Thyroid gland (tissue), 4 donors: ENCODE measurements at regions of chr1 and their contacts with region 1.

Region 1: GRCh38 chr1:184222652-184223052 is 164.2 kb upstream of the C1orf21 start:
- DNase-seq: peak; percentile 41 to 56
- H3K4me3 ChIP-seq: no peak overlapping the region
- H3K27ac ChIP-seq: no peak overlapping the region
- H3K4me1 ChIP-seq: no peaks in the 10 kb centered on the region
- H3K27me3 ChIP-seq: no peaks in the 10 kb centered on the region
- CTCF ChIP-seq: peak; percentile 78 to 96 (median 91)
- POLR2A ChIP-seq: no peak

Region 2: DNA sequence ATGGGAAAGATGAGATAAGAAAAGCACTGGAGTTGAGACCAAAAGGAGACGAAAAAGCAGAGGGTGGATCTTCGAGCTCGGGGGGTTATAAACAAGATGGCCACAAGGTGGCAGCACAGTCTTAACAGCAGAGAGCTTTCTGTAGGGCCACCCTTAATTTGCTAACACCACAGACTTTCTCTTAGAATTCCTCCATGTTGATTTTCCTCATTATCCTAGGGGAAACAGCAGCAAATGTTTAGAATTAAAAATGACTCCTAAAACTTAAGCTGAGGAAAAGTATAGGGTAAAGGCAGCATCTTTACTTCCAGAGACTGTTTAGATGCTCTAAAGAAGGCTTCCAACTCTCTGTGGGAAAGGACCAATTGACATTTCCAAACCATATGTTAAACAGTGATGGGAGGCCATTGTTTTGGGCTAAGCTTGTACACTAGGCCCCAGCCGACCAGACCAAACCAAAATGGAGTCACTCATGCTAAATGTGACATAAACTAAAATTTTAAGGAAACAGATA is 567.0 kb before region 1 on chr1:
- intact Hi-C with region 1: loop called (anchors 10 kb)
- DNase-seq: peak; percentile 78 to 83
- H3K4me3 ChIP-seq: no peak overlapping the region
- H3K27ac ChIP-seq: no peak overlapping the region
- H3K4me1 ChIP-seq: no peaks in the 10 kb centered on the region
- H3K27me3 ChIP-seq: no peaks in the 10 kb centered on the region
- CTCF ChIP-seq: peak; percentile 63 to 91 (median 86)
- POLR2A ChIP-seq: no peak

Region 3: DNA sequence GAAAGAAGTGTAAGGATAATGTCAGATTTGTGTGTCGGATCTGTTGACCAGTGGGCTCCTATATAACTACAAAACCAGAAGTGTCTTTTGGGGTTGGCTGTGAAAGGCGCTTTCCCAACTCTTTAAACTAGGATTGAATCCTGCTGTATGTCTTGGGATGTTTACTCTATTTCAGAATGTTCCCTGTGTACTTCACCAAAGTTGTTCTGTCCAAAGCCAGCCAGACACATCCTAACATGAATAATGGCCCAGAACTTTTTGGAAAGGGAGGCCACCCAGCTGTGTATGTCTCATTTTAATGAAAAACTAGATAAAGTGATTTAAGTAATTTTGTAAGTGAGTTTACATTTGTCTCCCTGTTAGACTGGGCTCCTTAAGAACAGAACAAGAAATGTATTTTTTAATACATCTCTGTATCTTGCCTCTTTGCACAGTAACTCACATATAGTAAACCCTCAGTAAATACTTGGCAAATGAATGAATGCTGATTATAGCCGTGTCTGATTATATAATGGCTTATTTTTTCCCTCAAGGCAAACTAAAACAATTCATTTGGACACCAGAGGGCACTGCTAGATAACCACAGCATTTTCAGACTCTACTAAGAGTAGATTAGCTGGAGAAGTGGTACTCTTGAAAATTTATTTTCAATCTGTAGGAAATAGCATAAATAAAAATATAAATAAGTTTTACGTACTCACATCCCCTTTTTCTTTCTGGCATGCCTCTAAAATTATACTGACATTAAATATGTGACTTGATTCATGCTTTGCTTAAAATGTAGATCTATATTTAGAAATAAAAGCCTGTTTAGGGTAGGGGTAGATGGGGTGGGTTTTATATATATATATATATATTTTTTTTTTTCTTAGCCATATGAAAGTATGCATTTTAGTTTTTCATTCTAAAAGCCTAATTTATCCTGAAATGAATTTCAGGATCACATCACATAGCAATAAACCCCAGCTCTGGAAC is 147.3 kb before region 1 on chr1:
- intact Hi-C with region 1: loop called (anchors 5 kb)
- DNase-seq: peak; percentile 15 to 17
- H3K4me3 ChIP-seq: no peak overlapping the region
- H3K27ac ChIP-seq: peak overlapping the region in 1 of 3 donors; percentile 7
- H3K4me1 ChIP-seq: no peaks in the 10 kb centered on the region
- H3K27me3 ChIP-seq: no peaks in the 10 kb centered on the region
- CTCF ChIP-seq: peak; percentile 36 to 90 (median 67)
- POLR2A ChIP-seq: no peak

Region 4: GRCh38 chr1:184340984-184341383 is 118.3 kb after region 1 on chr1:
- intact Hi-C with region 1: no loop called
- DNase-seq: no peak
- H3K4me3 ChIP-seq: no peak overlapping the region
- H3K27ac ChIP-seq: no peak overlapping the region
- H3K4me1 ChIP-seq: no peaks in the 10 kb centered on the region
- H3K27me3 ChIP-seq: no peaks in the 10 kb centered on the region
- CTCF ChIP-seq: peak in 1 of 6 experiments; percentile 21
- POLR2A ChIP-seq: no peak

Region 5: GRCh38 chr1:184664042-184664655 is 441.5 kb after region 1 on chr1:
- intact Hi-C with region 1: loop called (anchors 10 kb)
- DNase-seq: peak; percentile 73 to 76
- H3K4me3 ChIP-seq: peak overlapping the region in 1 of 3 donors; percentile 6
- H3K27ac ChIP-seq: no peak overlapping the region
- H3K4me1 ChIP-seq: peaks cover 0 to 10% of the 10 kb centered on the region in 2 donors
- H3K27me3 ChIP-seq: no peaks in the 10 kb centered on the region
- CTCF ChIP-seq: peak; percentile 75 to 94 (median 84)
- POLR2A ChIP-seq: no peak